Calu3 (cell line): ENCODE measurements at regions of chr17 and their contacts with region 1.

Region 1: DNA sequence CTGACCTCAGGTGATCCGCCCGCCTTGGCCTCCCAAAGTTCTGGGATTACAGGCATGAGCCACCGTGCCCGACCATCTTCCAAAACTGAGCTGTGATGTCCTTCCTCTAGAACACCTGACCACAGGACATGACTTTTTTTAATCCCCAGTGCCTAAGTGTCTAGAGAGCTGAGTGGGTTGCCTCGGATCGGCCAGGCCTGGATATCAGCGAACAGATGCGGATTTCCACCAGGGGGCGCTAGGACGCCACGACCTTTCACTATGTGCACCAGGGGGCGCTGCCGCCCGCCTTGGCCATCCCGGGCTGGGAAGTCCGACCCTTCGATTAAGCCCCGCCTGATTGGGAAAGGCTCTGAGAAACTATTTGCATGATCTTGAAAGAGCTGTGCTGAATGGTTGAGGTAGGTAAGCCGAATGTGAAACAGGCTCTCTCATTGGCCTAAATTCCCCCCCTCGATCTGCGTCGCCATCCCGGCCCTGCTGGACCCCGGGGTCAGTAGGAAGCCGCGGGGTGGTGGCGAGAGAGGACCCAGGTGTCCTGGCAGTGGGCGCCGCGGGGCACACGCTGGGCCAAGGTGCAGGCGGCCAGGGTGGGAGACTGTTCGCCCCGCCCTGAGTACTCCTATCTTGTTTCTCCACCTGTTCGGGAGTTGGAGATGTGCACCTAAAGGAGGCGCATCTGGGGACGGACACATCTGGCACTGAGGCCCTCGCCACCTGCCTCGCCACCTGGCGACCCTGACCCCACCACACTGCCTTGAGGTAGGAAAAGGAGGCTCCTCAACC is at the start of gene ACBD4:
- DNase-seq: peak; percentile 99
- H3K4me3 Mint-ChIP-seq: peak within 1 kb of the TSS; percentile 90
- H3K27ac Mint-ChIP-seq: peak within 1 kb of the TSS; percentile 81
- H3K4me1 Mint-ChIP-seq: peaks cover 29% of the 10 kb centered on the region
- H3K27me3 Mint-ChIP-seq: no peaks in the 10 kb centered on the region
- CTCF ChIP-seq: peak; percentile 100
- total RNA-seq, gene ACBD4: 21.8 and 23.2 TPM in 2 replicates

Region 2: DNA sequence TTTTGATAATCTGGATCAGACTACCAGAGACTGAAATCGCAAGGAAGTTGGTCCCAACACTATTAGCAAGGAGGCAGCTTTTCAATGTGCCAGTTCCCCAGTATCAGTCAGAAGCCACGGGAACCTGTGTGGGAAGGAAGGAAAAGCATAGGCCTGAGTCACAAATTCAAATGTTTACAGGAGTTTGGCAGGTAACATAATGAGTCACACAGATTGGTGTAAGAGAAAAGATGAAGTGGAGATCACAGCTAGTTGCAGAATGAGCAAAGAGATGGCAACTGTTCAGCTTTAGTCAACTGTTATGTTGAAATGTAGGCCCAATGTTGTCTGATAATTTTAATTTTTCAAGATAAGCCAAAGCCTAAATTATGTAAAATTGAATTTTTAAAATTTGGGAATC is 717.8 kb before region 1 on chr17:
- CTCF ChIA-PET with region 1: no interaction called
- intact Hi-C with region 1: no loop called
- DNase-seq: peak; percentile 35
- H3K4me3 Mint-ChIP-seq: no peak overlapping the region
- H3K27ac Mint-ChIP-seq: peak overlapping the region; percentile 3
- H3K4me1 Mint-ChIP-seq: peaks cover 13% of the 10 kb centered on the region
- H3K27me3 Mint-ChIP-seq: no peaks in the 10 kb centered on the region
- CTCF ChIP-seq: no peak

Region 3: GRCh38 chr17:44919885-44920564 is 215.4 kb before region 1 on chr17:
- CTCF ChIA-PET with region 1: interaction called, 9 read pairs
- intact Hi-C with region 1: loop called (anchors 10 kb)
- DNase-seq: peak; percentile 90
- H3K4me3 Mint-ChIP-seq: no peak overlapping the region
- H3K27ac Mint-ChIP-seq: no peak overlapping the region
- H3K4me1 Mint-ChIP-seq: peaks cover 25% of the 10 kb centered on the region
- H3K27me3 Mint-ChIP-seq: peaks cover 44% of the 10 kb centered on the region
- CTCF ChIP-seq: peak; percentile 85

Region 4: DNA sequence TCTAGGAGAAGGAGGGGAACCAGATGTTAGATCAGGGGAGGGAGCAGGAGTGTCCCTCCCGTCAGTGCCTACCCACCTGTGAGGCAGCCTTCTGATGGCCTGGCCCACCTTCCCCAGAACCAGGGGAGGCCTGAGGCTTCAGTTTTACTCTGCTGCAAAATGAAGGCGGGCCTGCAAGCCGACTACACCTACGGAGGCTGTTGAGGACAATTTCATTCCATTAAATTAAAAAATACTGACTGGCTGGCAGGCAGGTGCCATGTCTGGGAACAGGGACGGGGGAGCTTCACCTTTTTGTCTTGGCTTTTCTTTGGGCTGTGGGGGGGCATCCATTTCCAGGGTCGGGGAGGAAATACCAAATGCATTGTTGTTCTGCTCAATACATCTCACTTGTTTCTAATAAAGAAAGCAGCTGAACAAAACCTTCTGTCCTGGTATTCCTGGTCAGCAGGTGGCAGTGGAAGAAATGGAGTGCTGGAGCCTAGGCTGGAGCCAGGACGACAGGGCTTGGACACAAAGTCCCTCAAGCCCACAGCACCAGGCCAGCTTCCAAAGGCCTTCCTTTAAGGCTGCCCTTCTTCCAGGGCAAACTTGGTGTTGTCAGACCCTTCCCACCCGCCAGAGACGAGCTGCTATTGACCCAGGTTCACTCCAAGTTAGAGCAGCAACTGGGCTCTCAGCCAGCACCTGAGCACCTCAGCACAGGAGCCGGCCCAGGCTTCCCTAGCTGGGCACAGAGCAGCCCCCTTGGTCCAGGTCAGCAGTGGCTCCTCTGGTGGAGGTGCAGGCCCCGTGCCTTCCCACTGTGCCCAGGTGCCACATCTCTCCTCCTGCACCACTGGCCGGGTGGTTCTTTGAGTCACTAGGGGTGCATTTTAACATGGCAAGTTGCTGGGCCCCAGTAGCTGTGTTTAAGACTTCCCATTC is 26.5 kb before region 1 on chr17:
- CTCF ChIA-PET with region 1: interaction called, 12 read pairs
- intact Hi-C with region 1: loop called (anchors 2 kb)
- DNase-seq: no peak
- H3K4me3 Mint-ChIP-seq: no peak overlapping the region
- H3K27ac Mint-ChIP-seq: no peak overlapping the region
- H3K4me1 Mint-ChIP-seq: no peaks in the 10 kb centered on the region
- H3K27me3 Mint-ChIP-seq: no peaks in the 10 kb centered on the region
- CTCF ChIP-seq: no peak

Region 5: GRCh38 chr17:45172454-45173286 is 37.3 kb after region 1 on chr17:
- CTCF ChIA-PET with region 1: interaction called, 49 read pairs
- intact Hi-C with region 1: loop called (anchors 1 kb)
- DNase-seq: peak; percentile 99
- H3K4me3 Mint-ChIP-seq: peak overlapping the region; percentile 63
- H3K27ac Mint-ChIP-seq: peak overlapping the region; percentile 96
- H3K4me1 Mint-ChIP-seq: peaks cover 62% of the 10 kb centered on the region
- H3K27me3 Mint-ChIP-seq: no peaks in the 10 kb centered on the region
- CTCF ChIP-seq: peak; percentile 28

Region 6: GRCh38 chr17:45228763-45229539 is 93.6 kb after region 1 on chr17:
- CTCF ChIA-PET with region 1: interaction called, 56 read pairs
- intact Hi-C with region 1: no loop called
- DNase-seq: peak; percentile 58
- H3K4me3 Mint-ChIP-seq: no peak overlapping the region
- H3K27ac Mint-ChIP-seq: no peak overlapping the region
- H3K4me1 Mint-ChIP-seq: peaks cover 22% of the 10 kb centered on the region
- H3K27me3 Mint-ChIP-seq: peaks cover 23% of the 10 kb centered on the region
- CTCF ChIP-seq: no peak

Region 7: DNA sequence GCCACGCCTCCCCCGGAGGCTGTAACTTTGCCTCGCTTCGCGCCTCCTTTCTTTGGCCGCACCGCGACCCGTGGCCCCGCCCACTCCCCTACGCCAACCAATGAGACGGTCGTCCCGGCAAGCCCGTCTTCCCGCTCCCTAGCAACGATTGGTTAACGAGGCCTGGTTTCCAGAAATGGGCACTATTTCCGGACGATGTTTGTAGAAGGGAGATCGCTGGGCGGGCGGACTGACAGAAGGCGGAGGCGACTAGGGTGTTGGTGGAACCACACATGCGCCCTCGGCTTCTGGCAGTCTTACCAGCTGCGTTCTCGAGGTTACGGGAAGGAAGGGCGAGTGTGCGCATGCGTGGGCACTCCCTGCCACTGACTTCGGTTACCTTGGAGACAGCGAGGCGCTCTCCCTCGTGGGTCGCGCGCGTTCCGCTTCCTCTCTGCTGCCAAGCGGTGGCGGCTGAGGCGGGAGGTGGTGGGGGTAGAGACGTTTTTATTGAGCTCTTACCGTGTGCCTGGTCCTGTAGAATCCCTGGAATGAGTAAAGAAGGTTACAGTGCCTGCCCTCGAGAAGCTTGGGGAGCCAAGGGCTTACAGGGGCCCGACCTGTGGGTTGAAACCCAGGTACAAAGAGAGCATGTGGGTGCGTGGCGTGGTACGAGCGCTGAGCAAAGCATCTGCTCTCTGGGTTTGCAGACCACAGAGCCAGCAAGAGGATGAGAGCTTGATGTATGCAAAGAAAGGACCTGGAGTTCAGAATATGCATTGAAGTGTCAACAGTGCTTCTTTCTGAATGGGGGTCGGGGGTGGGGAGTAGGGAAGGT is 181.9 kb after region 1 on chr17:
- CTCF ChIA-PET with region 1: interaction called, 11 read pairs
- intact Hi-C with region 1: no loop called
- DNase-seq: peak; percentile 100
- H3K4me3 Mint-ChIP-seq: peak overlapping the region; percentile 88
- H3K27ac Mint-ChIP-seq: peak overlapping the region; percentile 95
- H3K4me1 Mint-ChIP-seq: peaks cover 85% of the 10 kb centered on the region
- H3K27me3 Mint-ChIP-seq: no peaks in the 10 kb centered on the region
- CTCF ChIP-seq: peak; percentile 11